ENCODE measurements at regions of chr2 and their contacts with region 1.

Region 1: GRCh38 chr2:43676322-43677050 is at the start of gene C1GALT1C1L:
- DNase-seq: peak; percentile 92
- H3K4me3 ChIP-seq: peak within 1 kb of the TSS; percentile 55 to 65 (median 58)
- H3K27ac ChIP-seq: peak within 1 kb of the TSS; percentile 26 to 89 (median 84)
- H3K4me1 ChIP-seq: peaks cover 0 to 24% (median 9%) of the 10 kb centered on the region in 4 donors
- H3K27me3 ChIP-seq: no peaks in the 10 kb centered on the region
- CTCF ChIP-seq: no peak
- EP300 ChIP-seq: peak; percentile 1 to 38 (median 22)
- POLR2A ChIP-seq: peak in 1 of 2 donors; percentile 38
- total RNA-seq, gene C1GALT1C1L: 1.1 to 4.3 (median 2.3) TPM

Region 2: DNA sequence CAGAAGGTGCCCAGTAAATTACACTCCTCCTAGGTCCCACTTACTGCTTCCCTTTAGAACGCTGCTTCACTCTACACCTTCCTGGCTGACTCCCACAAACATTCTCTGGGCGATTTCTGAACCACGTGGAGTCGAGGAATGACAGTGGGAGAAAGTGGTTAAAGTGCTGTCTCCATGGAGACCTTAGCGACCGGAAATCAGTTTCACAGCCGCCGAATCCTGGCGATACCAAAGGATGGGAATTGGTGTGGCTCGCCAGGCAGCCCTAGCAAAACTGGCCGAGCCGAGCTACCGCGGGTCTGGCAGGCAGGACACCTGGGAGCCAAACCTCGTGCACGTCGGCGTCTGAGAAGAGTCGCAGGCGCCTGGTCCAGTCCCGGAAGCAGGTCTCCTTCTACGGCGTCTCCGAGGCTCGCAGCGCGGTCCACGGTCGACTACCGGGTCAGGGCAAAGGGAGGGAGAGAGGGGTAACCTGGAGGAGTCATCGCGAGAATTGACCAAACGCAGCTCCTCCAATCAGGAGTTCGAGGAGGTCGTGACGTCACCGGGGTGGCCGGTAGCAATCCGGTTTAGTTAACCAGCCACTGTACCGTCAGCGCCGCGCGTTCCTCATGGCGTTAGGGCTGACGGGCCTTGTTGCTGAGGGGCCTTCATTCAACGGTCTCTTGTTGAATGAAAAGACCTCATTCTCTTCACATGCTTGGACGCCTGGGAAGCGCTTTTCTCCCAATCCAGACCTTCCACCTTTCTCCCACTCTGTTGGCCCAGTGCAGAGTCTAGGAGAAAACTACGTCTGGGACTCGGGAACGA is 80.7 kb before region 1 on chr2 and contains the start of gene THADA:
- intact Hi-C with region 1: loop called (anchors 2 kb)
- DNase-seq: peak; percentile 100
- H3K4me3 ChIP-seq: peak within 1 kb of the TSS; percentile 63 to 85 (median 70)
- H3K27ac ChIP-seq: peak within 1 kb of the TSS; percentile 90 to 95 (median 92)
- H3K4me1 ChIP-seq: peaks cover 0 to 23% (median 16%) of the 10 kb centered on the region in 4 donors
- H3K27me3 ChIP-seq: no peaks in the 10 kb centered on the region
- CTCF ChIP-seq: no peak
- EP300 ChIP-seq: peak in 1 of 4 donors; percentile 22
- POLR2A ChIP-seq: peak; percentile 90 to 92
- total RNA-seq, gene THADA: 20.2 to 35.2 (median 29.6) TPM

Region 3: GRCh38 chr2:43637030-43637803 is 39.3 kb before region 1 on chr2 and contains the start of gene PLEKHH2:
- intact Hi-C with region 1: loop called (anchors 5 kb)
- DNase-seq: peak; percentile 97
- H3K4me3 ChIP-seq: peak within 1 kb of the TSS; percentile 74 to 97 (median 94)
- H3K27ac ChIP-seq: peak within 1 kb of the TSS; percentile 81 to 92 (median 88)
- H3K4me1 ChIP-seq: peaks cover 0 to 15% (median 8%) of the 10 kb centered on the region in 4 donors
- H3K27me3 ChIP-seq: no peaks in the 10 kb centered on the region
- CTCF ChIP-seq: no peak
- EP300 ChIP-seq: no peak
- POLR2A ChIP-seq: peak; percentile 66 to 80
- total RNA-seq, gene PLEKHH2: 35.3 to 83.1 (median 54.9) TPM

Region 4: GRCh38 chr2:43707255-43708015 is 30.9 kb after region 1 on chr2:
- intact Hi-C with region 1: loop called (anchors 1 kb)
- DNase-seq: peak; percentile 92
- H3K4me3 ChIP-seq: no peak overlapping the region
- H3K27ac ChIP-seq: peak overlapping the region in 3 of 4 donors; percentile 27 to 72 (median 66)
- H3K4me1 ChIP-seq: peaks cover 0 to 25% (median 21%) of the 10 kb centered on the region in 4 donors
- H3K27me3 ChIP-seq: no peaks in the 10 kb centered on the region
- CTCF ChIP-seq: no peak
- EP300 ChIP-seq: no peak
- POLR2A ChIP-seq: no peak

Measured in sigmoid colon (tissue), 7 donors.